Posterior vena cava (tissue), 2 donors: ENCODE measurements at regions of chr2 and their contacts with region 1.

Region 1: GRCh38 chr2:178112202-178113152 is at the start of gene RBM45:
- DNase-seq: peak; percentile 98
- total RNA-seq, gene RBM45: 11.3 to 13.9 TPM

Region 2: GRCh38 chr2:178152033-178152432 is 39.6 kb after region 1 on chr2:
- intact Hi-C with region 1: no loop called
- DNase-seq: no peak

Region 3: GRCh38 chr2:178414266-178415247 is 302.1 kb after region 1 on chr2:
- intact Hi-C with region 1: loop called in 1 of 2 experiments (anchors 10 kb)
- DNase-seq: peak; percentile 95

Region 4: GRCh38 chr2:178770518-178770917 is 658.0 kb after region 1 on chr2:
- intact Hi-C with region 1: loop called in 1 of 2 experiments (anchors 5 kb)
- DNase-seq: no peak